ENCODE measurements at regions of chr11 and their contacts with region 1.

Region 1: GRCh38 chr11:6353367-6353987 is 33.2 kb upstream of the CAVIN3 start:
- DNase-seq: peak; percentile 88
- ATAC-seq: peak; percentile 81
- H3K4me3 ChIP-seq: no peak overlapping the region
- H3K27ac ChIP-seq: no peak overlapping the region
- H3K4me1 ChIP-seq: peaks cover 5 to 16% of the 10 kb centered on the region in 2 experiments; a peak in 3 of 4 replicates
- H3K27me3 ChIP-seq: no peaks in the 10 kb centered on the region
- CTCF ChIP-seq: peak; percentile 92 to 99 (median 98)
- POLR2A ChIP-seq: no peak
- RAD21 ChIP-seq: peak; percentile 99

Region 2: DNA sequence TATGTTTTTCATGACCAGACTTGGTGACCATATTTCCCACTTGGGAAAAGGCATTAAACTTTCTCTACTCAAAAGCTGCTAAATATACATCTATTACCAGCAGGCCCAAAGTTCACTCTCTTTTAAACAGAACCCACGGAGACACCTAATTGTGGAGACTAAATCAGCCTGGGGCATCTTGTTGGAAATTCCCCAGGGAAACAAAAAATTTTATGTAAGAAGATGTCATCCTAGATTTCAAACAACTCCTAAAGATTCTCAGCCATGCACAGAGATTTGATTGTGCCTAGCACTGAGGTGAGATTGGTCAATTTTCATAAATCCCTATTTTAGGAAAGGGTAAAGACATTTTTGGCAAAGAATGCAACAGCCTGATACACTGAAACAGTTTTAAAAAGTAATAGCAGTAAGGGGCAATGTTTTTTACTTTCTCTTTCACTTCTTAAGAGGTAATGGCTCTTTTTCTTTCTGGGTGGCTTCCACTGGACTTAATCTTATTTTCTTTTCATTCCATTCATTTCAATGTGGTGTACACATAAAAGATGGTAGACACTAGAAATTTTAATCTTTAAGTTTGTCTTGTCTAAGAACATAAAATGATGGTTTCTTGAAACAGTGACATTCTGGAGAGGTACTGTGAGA is 535.1 kb before region 1 on chr11:
- CTCF ChIA-PET with region 1: no interaction called
- POLR2A ChIA-PET with region 1: no interaction called
- RAD21 ChIA-PET with region 1: no interaction called
- intact Hi-C with region 1: loop called (anchors 10 kb)
- DNase-seq: no peak
- ATAC-seq: no peak
- H3K4me3 ChIP-seq: no peak overlapping the region
- H3K27ac ChIP-seq: no peak overlapping the region
- H3K4me1 ChIP-seq: no peaks in the 10 kb centered on the region
- H3K27me3 ChIP-seq: peaks cover 73% of the 10 kb centered on the region
- CTCF ChIP-seq: no peak
- POLR2A ChIP-seq: no peak
- RAD21 ChIP-seq: no peak

Region 3: DNA sequence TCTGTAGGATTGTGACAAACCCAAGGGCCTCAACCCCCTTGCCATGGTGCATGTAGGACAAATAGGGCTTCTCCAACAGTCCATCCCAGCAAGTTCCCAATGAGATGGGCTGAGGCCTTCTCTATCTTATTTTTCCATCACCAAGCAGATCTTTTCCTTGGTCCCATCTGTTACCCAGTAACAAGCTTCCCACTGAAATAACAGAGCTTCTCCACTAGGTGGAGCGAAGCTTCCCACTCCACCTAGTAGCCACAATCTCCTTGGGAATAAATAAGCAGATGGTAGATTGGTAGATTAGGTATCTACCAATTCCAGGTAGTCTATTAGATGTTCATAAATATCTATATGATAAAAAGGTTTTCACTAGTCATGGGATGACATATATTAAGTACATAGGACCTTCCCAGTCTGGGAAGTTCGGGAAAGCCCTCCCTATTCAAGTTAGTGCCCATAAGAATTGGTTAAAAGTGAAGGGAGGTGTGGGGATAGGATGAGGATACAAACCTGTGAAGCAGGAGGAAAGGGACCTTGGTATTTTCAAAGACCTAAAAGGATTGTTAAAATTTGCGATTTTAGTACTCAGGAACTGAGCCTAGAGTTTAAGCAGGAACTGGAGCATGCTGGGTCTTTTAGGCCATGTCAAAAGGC is 360.7 kb before region 1 on chr11:
- CTCF ChIA-PET with region 1: interaction called, 5 read pairs
- POLR2A ChIA-PET with region 1: no interaction called
- RAD21 ChIA-PET with region 1: no interaction called
- intact Hi-C with region 1: loop called (anchors 1 kb)
- DNase-seq: peak; percentile 13
- ATAC-seq: peak; percentile 82
- H3K4me3 ChIP-seq: no peak overlapping the region
- H3K27ac ChIP-seq: no peak overlapping the region
- H3K4me1 ChIP-seq: no peaks in the 10 kb centered on the region
- H3K27me3 ChIP-seq: peaks cover 42% of the 10 kb centered on the region
- CTCF ChIP-seq: peak; percentile 38 to 73 (median 66); a peak in 5 of 6 replicates
- POLR2A ChIP-seq: no peak
- RAD21 ChIP-seq: peak; percentile 30; the same call in 1 of the 2 replicates

Region 4: GRCh38 chr11:6022956-6023355 is 330.5 kb before region 1 on chr11:
- CTCF ChIA-PET with region 1: interaction called, 5 read pairs
- POLR2A ChIA-PET with region 1: no interaction called
- RAD21 ChIA-PET with region 1: no interaction called
- intact Hi-C with region 1: loop called (anchors 1 kb)
- DNase-seq: peak; percentile 33
- ATAC-seq: peak; percentile 77
- H3K4me3 ChIP-seq: no peak overlapping the region
- H3K27ac ChIP-seq: no peak overlapping the region
- H3K4me1 ChIP-seq: no peaks in the 10 kb centered on the region
- H3K27me3 ChIP-seq: peaks cover 62% of the 10 kb centered on the region
- CTCF ChIP-seq: peak; percentile 32 to 55 (median 43); a peak in 4 of 6 replicates
- POLR2A ChIP-seq: no peak
- RAD21 ChIP-seq: peak; percentile 68

Region 5: DNA sequence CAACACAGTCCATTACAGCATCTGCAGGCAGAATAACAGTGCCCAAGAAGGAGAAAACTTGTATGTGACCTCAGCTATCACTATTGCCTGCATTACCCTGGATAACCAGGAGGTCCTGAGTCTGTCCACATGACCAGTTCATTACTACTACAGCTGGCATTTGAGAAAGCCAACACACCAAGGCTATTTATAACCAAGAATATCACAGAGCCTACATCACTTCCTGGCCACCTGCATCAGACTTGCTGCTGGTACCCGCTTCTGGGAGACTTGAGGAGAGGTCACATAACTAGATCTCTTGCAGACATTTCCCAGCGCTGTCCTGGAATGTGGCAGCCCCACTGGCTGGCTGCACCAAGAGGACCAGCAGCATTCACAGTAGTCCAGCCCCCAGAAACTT is 257.1 kb before region 1 on chr11:
- CTCF ChIA-PET with region 1: no interaction called
- POLR2A ChIA-PET with region 1: no interaction called
- RAD21 ChIA-PET with region 1: no interaction called
- intact Hi-C with region 1: no loop called
- DNase-seq: no peak
- ATAC-seq: no peak
- H3K4me3 ChIP-seq: no peak overlapping the region
- H3K27ac ChIP-seq: no peak overlapping the region
- H3K4me1 ChIP-seq: no peaks in the 10 kb centered on the region
- H3K27me3 ChIP-seq: peaks cover 31% of the 10 kb centered on the region
- CTCF ChIP-seq: no peak
- POLR2A ChIP-seq: no peak
- RAD21 ChIP-seq: no peak

Region 6: DNA sequence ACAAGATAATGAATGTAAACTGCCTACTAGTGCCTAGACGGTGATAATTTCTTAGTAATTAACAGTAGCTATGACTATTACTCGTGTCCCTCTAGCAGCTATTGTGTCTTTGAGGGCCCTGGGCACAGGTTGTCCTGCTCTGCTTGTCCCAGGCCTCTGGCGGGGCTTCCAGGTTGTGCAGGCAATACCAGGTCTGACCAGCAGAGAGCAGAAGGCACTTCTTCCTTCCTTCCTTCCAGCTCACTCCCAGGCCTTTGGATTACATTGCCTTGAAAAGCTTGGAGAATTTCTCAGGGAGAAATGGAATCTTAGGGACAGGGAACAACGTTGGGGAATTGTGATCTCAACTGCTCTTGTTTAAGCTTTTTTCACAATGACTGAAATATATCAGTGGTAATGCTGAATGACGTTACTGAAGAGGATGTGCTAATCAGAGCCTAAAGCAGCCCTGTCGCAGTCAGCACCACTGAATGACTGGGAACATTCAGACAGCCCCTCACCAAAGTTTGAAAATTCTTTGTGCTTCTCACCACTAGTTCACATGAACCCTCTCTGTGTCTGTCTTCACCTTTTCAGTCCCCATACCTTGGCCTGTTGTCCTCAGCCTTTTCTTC is 102.2 kb before region 1 on chr11:
- CTCF ChIA-PET with region 1: interaction called, 55 read pairs
- POLR2A ChIA-PET with region 1: no interaction called
- RAD21 ChIA-PET with region 1: no interaction called
- intact Hi-C with region 1: loop called (anchors 1 kb)
- DNase-seq: peak; percentile 64
- ATAC-seq: peak; percentile 99
- H3K4me3 ChIP-seq: no peak overlapping the region
- H3K27ac ChIP-seq: no peak overlapping the region
- H3K4me1 ChIP-seq: peaks cover 0 to 9% of the 10 kb centered on the region in 2 experiments; a peak in 2 of 4 replicates
- H3K27me3 ChIP-seq: peaks cover 13% of the 10 kb centered on the region; the same call in 1 of the 2 replicates
- CTCF ChIP-seq: peak; percentile 84 to 97 (median 92)
- POLR2A ChIP-seq: no peak
- RAD21 ChIP-seq: peak; percentile 68

Region 7: DNA sequence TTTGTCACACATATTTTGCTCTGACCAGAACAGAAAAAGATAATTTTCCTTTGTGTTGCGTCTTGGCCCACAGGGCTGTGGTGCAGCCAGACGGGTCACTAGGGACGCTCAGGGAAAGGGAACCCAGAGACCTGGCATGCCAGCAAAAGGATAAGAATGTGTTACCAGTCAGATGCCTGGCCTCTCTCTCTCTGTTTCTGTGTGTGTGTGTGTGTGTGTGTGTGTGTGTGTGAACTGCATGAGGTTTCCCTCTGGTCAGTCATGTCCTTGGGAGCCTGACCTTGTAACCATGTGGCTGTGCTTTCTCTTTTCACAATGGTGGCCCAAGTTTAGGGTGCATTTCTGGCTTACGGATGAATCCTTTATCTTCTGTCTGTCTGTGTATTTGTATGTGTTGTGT is 68.5 kb before region 1 on chr11:
- CTCF ChIA-PET with region 1: interaction called, 13 read pairs
- POLR2A ChIA-PET with region 1: no interaction called
- RAD21 ChIA-PET with region 1: no interaction called
- intact Hi-C with region 1: no loop called
- DNase-seq: no peak
- ATAC-seq: no peak
- H3K4me3 ChIP-seq: no peak overlapping the region
- H3K27ac ChIP-seq: no peak overlapping the region
- H3K4me1 ChIP-seq: peaks cover 0 to 10% of the 10 kb centered on the region in 2 experiments; a peak in 3 of 4 replicates
- H3K27me3 ChIP-seq: peaks cover 43% of the 10 kb centered on the region
- CTCF ChIP-seq: no peak
- POLR2A ChIP-seq: no peak
- RAD21 ChIP-seq: no peak

Region 8: GRCh38 chr11:6298605-6299004 is 54.9 kb before region 1 on chr11:
- CTCF ChIA-PET with region 1: interaction called, 9 read pairs
- POLR2A ChIA-PET with region 1: no interaction called
- RAD21 ChIA-PET with region 1: no interaction called
- intact Hi-C with region 1: loop called (anchors 2 kb)
- DNase-seq: peak; percentile 51
- ATAC-seq: peak; percentile 100
- H3K4me3 ChIP-seq: no peak overlapping the region
- H3K27ac ChIP-seq: no peak overlapping the region
- H3K4me1 ChIP-seq: no peaks in the 10 kb centered on the region
- H3K27me3 ChIP-seq: no peaks in the 10 kb centered on the region
- CTCF ChIP-seq: peak; percentile 97 to 100 (median 99)
- POLR2A ChIP-seq: no peak
- RAD21 ChIP-seq: peak; percentile 70

Measured in HCT116 (cell line).